Mammary epithelial cell (primary cell): ENCODE measurements at regions of chr2 and their contacts with region 1.

Region 1: DNA sequence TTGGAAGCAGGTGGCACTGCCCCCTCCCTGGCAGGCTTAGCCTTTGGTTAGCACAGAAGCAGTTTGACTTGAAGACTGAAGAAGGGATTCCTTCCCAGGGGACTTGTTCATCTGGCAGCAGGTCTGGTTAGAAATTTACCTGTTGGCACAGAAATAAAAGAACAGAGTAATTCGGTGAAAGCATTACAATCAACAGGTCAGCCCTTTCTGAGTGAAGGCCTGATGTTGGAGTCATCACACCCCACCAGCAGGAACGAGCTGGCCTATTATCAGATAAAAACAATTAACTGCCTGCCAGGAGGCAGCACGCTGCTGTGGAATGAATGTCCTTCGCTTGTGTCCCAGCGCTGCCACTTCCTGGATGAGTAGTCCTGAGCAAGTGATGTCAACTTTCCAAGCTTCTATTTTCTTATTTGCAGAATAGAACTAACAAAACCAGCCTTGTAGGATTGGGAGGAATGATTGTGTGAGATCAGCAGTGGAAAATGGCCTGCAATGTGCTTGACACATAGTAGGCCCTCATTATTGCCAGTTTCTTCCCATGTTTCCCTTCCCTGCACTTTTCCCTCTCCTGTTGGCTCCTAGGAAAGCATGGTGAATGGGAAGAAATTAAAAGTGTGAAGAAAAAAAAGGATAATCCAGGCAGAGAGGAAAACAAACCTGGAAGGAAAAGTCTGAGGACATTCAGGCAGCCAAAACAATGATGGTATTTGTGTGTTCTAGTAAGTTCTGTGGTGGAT is 29.0 kb downstream of the LGALSL start:
- DNase-seq: peak; percentile 75
- H3K4me3 ChIP-seq: no peak overlapping the region
- H3K27ac ChIP-seq: peak overlapping the region; percentile 11
- H3K4me1 ChIP-seq: peaks cover 40% of the 10 kb centered on the region
- H3K27me3 ChIP-seq: no peaks in the 10 kb centered on the region
- CTCF ChIP-seq: peak in 1 of 2 donors; percentile 9

Region 2: GRCh38 chr2:64538764-64539433 is 56.0 kb after region 1 on chr2:
- CTCF ChIA-PET with region 1: no interaction called
- dilution Hi-C with region 1: no loop called
- in situ Hi-C with region 1: no loop called
- intact Hi-C with region 1: no loop called
- DNase-seq: no peak
- H3K4me3 ChIP-seq: no peak overlapping the region
- H3K27ac ChIP-seq: no peak overlapping the region
- H3K4me1 ChIP-seq: peaks cover 20% of the 10 kb centered on the region
- H3K27me3 ChIP-seq: no peaks in the 10 kb centered on the region
- CTCF ChIP-seq: no peak

Region 3: GRCh38 chr2:64551851-64552250 is 68.9 kb after region 1 on chr2:
- CTCF ChIA-PET with region 1: no interaction called
- dilution Hi-C with region 1: loop called (anchors 5 kb)
- in situ Hi-C with region 1: no loop called
- intact Hi-C with region 1: no loop called
- DNase-seq: no peak
- H3K4me3 ChIP-seq: no peak overlapping the region
- H3K27ac ChIP-seq: no peak overlapping the region
- H3K4me1 ChIP-seq: no peaks in the 10 kb centered on the region
- H3K27me3 ChIP-seq: no peaks in the 10 kb centered on the region
- CTCF ChIP-seq: no peak